Common myeloid progenitor, CD34-positive (primary cell): ENCODE measurements at regions of chr20 and their contacts with region 1.

Region 1: DNA sequence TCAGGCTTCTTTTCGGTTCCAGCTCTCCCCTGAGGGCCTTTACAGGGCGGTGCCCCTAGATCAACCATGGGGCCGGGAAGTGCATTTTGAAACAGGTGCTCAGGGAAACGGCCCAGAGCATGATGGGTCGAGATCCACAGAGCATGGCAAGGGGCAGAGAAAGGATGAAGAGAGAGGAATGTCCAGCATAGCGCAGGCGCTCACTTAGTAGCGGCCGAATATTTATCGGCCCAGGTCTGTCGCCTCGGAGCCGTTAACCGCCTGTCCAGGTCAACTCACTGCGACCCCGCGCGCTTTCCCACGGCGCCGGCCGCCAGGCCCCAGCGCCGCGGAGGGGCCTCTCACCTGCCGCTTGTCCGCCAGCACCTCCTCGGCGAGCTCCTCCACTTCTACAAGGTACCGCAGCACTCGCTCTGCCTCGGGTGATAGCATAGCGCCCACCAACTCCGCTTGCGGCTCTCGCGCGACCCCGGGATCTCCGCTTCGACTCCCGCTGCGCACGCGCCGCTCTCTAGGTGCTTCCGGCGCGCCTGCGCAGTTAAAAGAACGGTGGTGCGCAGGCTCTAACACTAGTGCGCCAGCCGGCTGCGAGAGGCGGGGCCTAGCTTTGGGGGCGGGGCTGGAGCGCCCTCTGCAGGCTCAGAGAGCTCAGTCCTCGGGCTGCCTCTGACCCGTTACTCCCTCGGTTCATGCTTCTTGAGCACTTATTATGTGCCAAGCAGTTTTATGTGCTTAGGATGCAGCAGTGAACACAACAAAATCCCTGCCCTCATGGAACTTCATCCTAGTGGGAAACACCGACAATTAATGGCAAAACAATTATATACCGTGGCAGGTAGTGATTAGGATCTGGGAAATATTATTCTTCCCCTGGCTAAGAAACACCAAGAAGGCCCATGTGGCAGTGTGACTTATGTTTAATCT is at the start of gene PDRG1:
- DNase-seq: peak; percentile 93 to 97 (median 97)
- H3K4me3 ChIP-seq: peak within 1 kb of the TSS; percentile 72 to 98 (median 91)
- H3K27ac ChIP-seq: peak within 1 kb of the TSS; percentile 90 to 93
- H3K4me1 ChIP-seq: peaks cover 0 to 18% (median 12%) of the 10 kb centered on the region in 4 experiments
- H3K27me3 ChIP-seq: peaks cover 0 to 17% (median 0%) of the 10 kb centered on the region in 5 experiments

Region 2: DNA sequence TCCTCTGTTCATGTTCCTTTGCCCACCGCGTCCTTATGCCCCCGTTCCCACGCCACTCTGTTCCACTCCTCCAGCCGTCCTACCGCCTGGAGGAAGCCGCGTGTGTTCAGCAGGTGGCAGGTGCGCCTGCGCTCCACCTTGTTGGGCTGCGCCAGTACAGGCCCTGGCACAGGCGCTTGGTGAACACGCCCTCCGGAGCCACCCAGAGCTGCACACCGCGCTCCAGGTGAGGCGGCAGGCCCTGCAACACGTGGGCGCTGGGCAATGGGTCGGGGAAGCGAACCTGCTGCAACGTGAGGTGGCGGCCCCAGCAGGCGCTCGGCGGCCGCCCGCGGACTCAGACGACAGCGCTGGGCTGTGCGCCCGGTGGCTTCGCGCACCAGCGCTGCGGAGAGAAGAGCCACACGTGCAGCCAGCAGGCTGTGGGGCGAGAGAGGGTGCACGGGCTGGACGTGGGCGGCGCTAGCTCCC is 102.3 kb before region 1 on chr20:
- CTCF ChIA-PET with region 1: interaction called, 98 read pairs
- POLR2A ChIA-PET with region 1: interaction called, 4 read pairs
- DNase-seq: no peak
- H3K4me3 ChIP-seq: no peak overlapping the region
- H3K27ac ChIP-seq: no peak overlapping the region
- H3K4me1 ChIP-seq: peaks cover 0 to 3% (median 1%) of the 10 kb centered on the region in 4 experiments
- H3K27me3 ChIP-seq: peaks cover 0 to 32% (median 11%) of the 10 kb centered on the region in 5 experiments

Region 3: GRCh38 chr20:31857861-31858759 is 93.7 kb before region 1 on chr20:
- CTCF ChIA-PET with region 1: interaction called, 98 read pairs
- POLR2A ChIA-PET with region 1: interaction called, 4 read pairs
- DNase-seq: peak in 2 of 3 donors; percentile 61 to 65
- H3K4me3 ChIP-seq: peak overlapping the region in 1 of 7 experiments; percentile 1
- H3K27ac ChIP-seq: no peak overlapping the region
- H3K4me1 ChIP-seq: peaks cover 0 to 42% (median 20%) of the 10 kb centered on the region in 4 experiments
- H3K27me3 ChIP-seq: peaks cover 0 to 18% (median 3%) of the 10 kb centered on the region in 5 experiments

Region 4: GRCh38 chr20:31879143-31879987 is 72.4 kb before region 1 on chr20:
- CTCF ChIA-PET with region 1: interaction called, 14 read pairs
- POLR2A ChIA-PET with region 1: interaction called, 3 read pairs
- DNase-seq: peak; percentile 94 to 97 (median 96)
- H3K4me3 ChIP-seq: peak overlapping the region; percentile 50 to 89 (median 70)
- H3K27ac ChIP-seq: peak overlapping the region; percentile 64 to 82
- H3K4me1 ChIP-seq: peaks cover 0 to 18% (median 10%) of the 10 kb centered on the region in 4 experiments
- H3K27me3 ChIP-seq: no peaks in the 10 kb centered on the region

Region 5: DNA sequence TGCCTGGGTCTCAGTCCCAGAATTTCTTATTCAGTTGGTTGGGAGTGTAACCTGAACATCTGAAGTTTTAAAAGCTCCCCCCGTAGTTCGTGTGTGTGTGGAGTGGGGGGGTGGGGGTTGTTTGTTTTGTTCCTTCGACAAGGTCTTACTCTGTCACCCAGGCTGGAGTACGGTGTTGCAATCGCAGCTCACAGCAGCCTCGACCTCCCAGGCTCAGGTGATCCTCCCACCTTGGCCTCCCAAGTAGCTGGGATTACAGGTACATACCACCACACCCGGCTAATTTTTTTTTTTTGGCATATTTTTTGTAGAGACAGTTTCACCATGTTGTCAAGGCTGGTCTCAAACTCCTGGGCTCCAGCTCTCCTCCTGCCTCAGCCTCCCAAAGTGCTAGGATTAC is 61.5 kb after region 1 on chr20:
- CTCF ChIA-PET with region 1: no interaction called
- POLR2A ChIA-PET with region 1: no interaction called
- DNase-seq: no peak
- H3K4me3 ChIP-seq: no peak overlapping the region
- H3K27ac ChIP-seq: no peak overlapping the region
- H3K4me1 ChIP-seq: peaks cover 0 to 8% (median 3%) of the 10 kb centered on the region in 4 experiments
- H3K27me3 ChIP-seq: peaks cover 0 to 13% (median 8%) of the 10 kb centered on the region in 5 experiments